Vagina (tissue), 2 donors: ENCODE measurements at regions of chr6 and their contacts with region 1.

Region 1: GRCh38 chr6:31267651-31268368 is 4.1 kb downstream of the HLA-C start:
- DNase-seq: no peak
- H3K4me3 ChIP-seq: no peak overlapping the region
- H3K27ac ChIP-seq: no peak overlapping the region
- H3K4me1 ChIP-seq: no peaks in the 10 kb centered on the region
- H3K27me3 ChIP-seq: no peaks in the 10 kb centered on the region
- CTCF ChIP-seq: no peak
- POLR2A ChIP-seq: no peak

Region 2: GRCh38 chr6:31351401-31352309 is 83.8 kb after region 1 on chr6:
- intact Hi-C with region 1: loop called (anchors 5 kb)
- DNase-seq: no peak
- H3K4me3 ChIP-seq: no peak overlapping the region
- H3K27ac ChIP-seq: no peak overlapping the region
- H3K4me1 ChIP-seq: peaks cover 26% of the 10 kb centered on the region
- H3K27me3 ChIP-seq: no peaks in the 10 kb centered on the region
- CTCF ChIP-seq: no peak
- POLR2A ChIP-seq: no peak